ENCODE measurements at regions of chr15 and their contacts with region 1.

Region 1: GRCh38 chr15:50876989-50877360 is 31.5 kb upstream of the AP4E1 start:
- DNase-seq: peak in 2 of 3 donors; percentile 51 to 94
- ATAC-seq: peak; percentile 81
- H3K4me3 ChIP-seq: no peak overlapping the region
- H3K4me1 ChIP-seq: peaks cover 12% of the 10 kb centered on the region
- CTCF ChIP-seq: peak; percentile 94

Region 2: GRCh38 chr15:50686468-50687301 is 190.3 kb before region 1 on chr15 and contains the start of gene TRPM7:
- intact Hi-C with region 1: loop called in 1 of 2 experiments (anchors 5 kb)
- DNase-seq: peak; percentile 93
- ATAC-seq: peak; percentile 97
- H3K4me3 ChIP-seq: peak within 1 kb of the TSS; percentile 75
- H3K4me1 ChIP-seq: peaks cover 19% of the 10 kb centered on the region
- CTCF ChIP-seq: no peak
- total RNA-seq, gene TRPM7: 34.7 to 39.7 (median 38.8) TPM

Region 3: GRCh38 chr15:50697109-50697797 is 179.7 kb before region 1 on chr15:
- intact Hi-C with region 1: no loop called
- DNase-seq: no peak
- ATAC-seq: no peak
- H3K4me3 ChIP-seq: no peak overlapping the region
- H3K4me1 ChIP-seq: no peaks in the 10 kb centered on the region
- CTCF ChIP-seq: no peak

Measured in mucosa of descending colon (tissue), 3 donors.